ENCODE measurements at regions of chr6 and their contacts with region 1.

Region 1: GRCh38 chr6:150068720-150069648 is at the start of gene ULBP3:
- DNase-seq: peak; percentile 37 to 64 (median 52)
- H3K4me3 ChIP-seq: peak within 1 kb of the TSS; percentile 65 to 79
- H3K4me3 Mint-ChIP-seq: peak within 1 kb of the TSS; percentile 82 to 93 (median 90)
- H3K27ac ChIP-seq: peak within 1 kb of the TSS; percentile 22
- H3K27ac Mint-ChIP-seq: peak within 1 kb of the TSS; percentile 23 to 74 (median 61)
- H3K4me1 ChIP-seq: peaks cover 18% of the 10 kb centered on the region
- H3K4me1 Mint-ChIP-seq: peaks cover 8 to 30% (median 18%) of the 10 kb centered on the region in 4 donors
- H3K27me3 ChIP-seq: no peaks in the 10 kb centered on the region
- H3K27me3 Mint-ChIP-seq: peaks cover 0 to 5% of the 10 kb centered on the region in 2 donors
- total RNA-seq, gene ULBP3: 0.42 TPM in 1 of 2 experiments, not detected in the other

Region 2: DNA sequence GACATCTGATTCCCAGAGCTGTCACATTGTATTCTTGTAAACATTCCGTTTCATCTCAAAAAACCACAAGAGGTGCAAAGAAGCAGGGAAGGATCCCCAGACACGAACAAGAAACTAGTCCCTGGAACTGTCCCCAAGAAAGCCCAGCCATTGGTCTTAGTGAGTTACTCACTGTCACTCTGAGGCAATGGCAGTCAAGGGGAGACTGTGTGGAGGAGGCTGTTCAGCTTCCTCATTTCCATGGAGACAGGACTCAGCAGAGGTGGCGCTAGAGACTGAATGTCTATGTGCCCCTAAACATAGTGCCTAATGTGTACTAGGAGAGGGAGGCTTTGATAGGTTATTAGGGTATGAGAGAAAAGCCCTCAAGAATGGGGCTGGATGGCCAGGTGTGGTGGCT is 94.2 kb before region 1 on chr6:
- CTCF ChIA-PET with region 1: no interaction called
- POLR2A ChIA-PET with region 1: no interaction called
- intact Hi-C with region 1: no loop called
- DNase-seq: no peak
- H3K4me3 ChIP-seq: no peak overlapping the region
- H3K4me3 Mint-ChIP-seq: no peak overlapping the region
- H3K27ac ChIP-seq: no peak overlapping the region
- H3K27ac Mint-ChIP-seq: no peak overlapping the region
- H3K4me1 ChIP-seq: no peaks in the 10 kb centered on the region
- H3K4me1 Mint-ChIP-seq: no peaks in the 10 kb centered on the region
- H3K27me3 ChIP-seq: peaks cover 8% of the 10 kb centered on the region
- H3K27me3 Mint-ChIP-seq: peaks cover 38 to 57% of the 10 kb centered on the region in 2 donors

Region 3: GRCh38 chr6:150053450-150053849 is 15.5 kb before region 1 on chr6:
- CTCF ChIA-PET with region 1: interaction called, 17 read pairs
- POLR2A ChIA-PET with region 1: no interaction called
- intact Hi-C with region 1: no loop called
- DNase-seq: no peak
- H3K4me3 ChIP-seq: no peak overlapping the region
- H3K4me3 Mint-ChIP-seq: no peak overlapping the region
- H3K27ac ChIP-seq: no peak overlapping the region
- H3K27ac Mint-ChIP-seq: no peak overlapping the region
- H3K4me1 ChIP-seq: no peaks in the 10 kb centered on the region
- H3K4me1 Mint-ChIP-seq: no peaks in the 10 kb centered on the region
- H3K27me3 ChIP-seq: peaks cover 8% of the 10 kb centered on the region
- H3K27me3 Mint-ChIP-seq: peaks cover 39 to 49% of the 10 kb centered on the region in 2 donors

Region 4: GRCh38 chr6:150079604-150080003 is 10.6 kb after region 1 on chr6:
- CTCF ChIA-PET with region 1: interaction called, 56 read pairs
- POLR2A ChIA-PET with region 1: interaction called, 3 read pairs
- intact Hi-C with region 1: no loop called
- DNase-seq: peak; percentile 55 to 67 (median 58)
- H3K4me3 ChIP-seq: no peak overlapping the region
- H3K4me3 Mint-ChIP-seq: peak overlapping the region; percentile 14 to 81 (median 68)
- H3K27ac ChIP-seq: no peak overlapping the region
- H3K27ac Mint-ChIP-seq: peak overlapping the region in 6 of 7 donors; percentile 25 to 86 (median 69)
- H3K4me1 ChIP-seq: peaks cover 23% of the 10 kb centered on the region
- H3K4me1 Mint-ChIP-seq: peaks cover 14 to 26% (median 23%) of the 10 kb centered on the region in 4 donors
- H3K27me3 ChIP-seq: no peaks in the 10 kb centered on the region
- H3K27me3 Mint-ChIP-seq: peaks cover 10 to 22% of the 10 kb centered on the region in 2 donors

Region 5: DNA sequence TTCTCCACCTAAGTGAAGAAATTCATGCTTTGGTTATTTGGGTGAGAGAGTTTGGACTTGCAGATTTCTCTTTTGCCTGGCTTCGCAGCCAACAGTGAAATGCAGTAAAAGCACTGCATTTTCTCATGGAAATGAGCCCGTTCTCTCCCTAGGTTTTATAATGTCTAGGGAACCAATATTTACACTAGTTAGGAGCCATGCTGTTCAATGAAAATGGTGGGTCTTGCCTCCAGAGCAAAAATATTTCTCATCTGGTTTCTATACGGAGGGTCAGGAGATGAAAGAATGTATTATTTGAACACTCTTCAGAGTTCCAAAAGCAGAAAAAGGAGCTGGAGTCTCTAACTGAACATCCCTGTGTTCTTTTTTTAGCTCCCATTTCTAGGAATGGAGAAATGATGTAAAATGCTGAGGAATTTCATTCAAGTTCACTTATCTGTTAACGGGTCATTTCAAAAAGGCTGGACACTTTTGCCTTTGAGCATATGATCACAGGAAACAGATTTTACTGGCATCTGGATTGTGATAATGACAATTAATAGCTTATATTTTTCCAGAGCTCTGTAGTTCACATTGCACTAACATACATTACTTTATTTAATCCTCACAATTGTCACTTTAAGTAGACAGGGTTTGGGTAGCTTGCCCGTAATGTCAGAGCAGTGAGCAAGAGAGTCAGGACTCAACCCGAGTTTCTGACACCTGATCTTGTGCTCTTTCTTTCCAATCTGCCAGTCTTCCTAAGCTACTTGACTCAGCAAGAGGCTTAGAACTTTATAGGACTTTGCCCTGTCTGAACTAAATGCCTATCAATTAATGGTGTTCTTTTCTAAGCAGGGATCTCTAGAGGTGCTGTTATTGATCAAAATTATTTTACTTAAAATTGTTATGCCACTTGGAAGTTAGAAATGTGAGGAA is 151.9 kb after region 1 on chr6:
- CTCF ChIA-PET with region 1: no interaction called
- POLR2A ChIA-PET with region 1: no interaction called
- intact Hi-C with region 1: no loop called
- DNase-seq: no peak
- H3K4me3 ChIP-seq: no peak overlapping the region
- H3K4me3 Mint-ChIP-seq: no peak overlapping the region
- H3K27ac ChIP-seq: no peak overlapping the region
- H3K27ac Mint-ChIP-seq: peak overlapping the region in 1 of 7 donors; percentile 6
- H3K4me1 ChIP-seq: no peaks in the 10 kb centered on the region
- H3K4me1 Mint-ChIP-seq: no peaks in the 10 kb centered on the region
- H3K27me3 ChIP-seq: no peaks in the 10 kb centered on the region
- H3K27me3 Mint-ChIP-seq: peaks cover 6 to 12% of the 10 kb centered on the region in 2 donors

Measured in CD4-positive, alpha-beta memory T cell (primary cell).